CD14-positive monocyte (primary cell): ENCODE measurements at regions of chr21 and their contacts with region 1.

Region 1: GRCh38 chr21:39217356-39218081 is 34.3 kb upstream of the PSMG1 start:
- DNase-seq: no peak
- H3K4me3 ChIP-seq: no peak overlapping the region
- H3K4me3 Mint-ChIP-seq: no peak overlapping the region
- H3K27ac ChIP-seq: no peak overlapping the region
- H3K27ac Mint-ChIP-seq: no peak overlapping the region
- H3K4me1 ChIP-seq: no peaks in the 10 kb centered on the region
- H3K4me1 Mint-ChIP-seq: no peaks in the 10 kb centered on the region
- H3K27me3 ChIP-seq: no peaks in the 10 kb centered on the region
- H3K27me3 Mint-ChIP-seq: no peaks in the 10 kb centered on the region
- CTCF ChIP-seq: no peak

Region 2: DNA sequence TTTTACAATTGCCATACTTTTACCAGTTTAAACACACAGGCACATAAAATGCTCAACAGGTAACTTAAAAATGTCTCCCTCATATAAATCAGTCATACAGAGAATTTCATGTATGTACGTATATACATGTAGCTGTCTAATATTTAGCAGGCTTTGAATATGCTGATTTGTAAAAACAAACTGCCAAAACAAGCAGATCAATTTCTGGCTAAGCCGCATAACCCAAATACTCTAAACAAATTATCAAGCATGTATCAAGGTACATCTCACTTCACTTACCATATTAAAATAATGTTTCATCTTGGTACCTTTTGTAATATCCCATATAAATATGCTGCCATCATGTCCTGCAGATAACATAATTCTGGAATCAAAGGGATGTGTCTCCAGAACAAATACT is 52.1 kb after region 1 on chr21:
- intact Hi-C with region 1: loop called in 1 of 2 experiments (anchors 10 kb)
- DNase-seq: no peak
- H3K4me3 ChIP-seq: no peak overlapping the region
- H3K4me3 Mint-ChIP-seq: no peak overlapping the region
- H3K27ac ChIP-seq: no peak overlapping the region
- H3K27ac Mint-ChIP-seq: no peak overlapping the region
- H3K4me1 ChIP-seq: no peaks in the 10 kb centered on the region
- H3K4me1 Mint-ChIP-seq: no peaks in the 10 kb centered on the region
- H3K27me3 ChIP-seq: no peaks in the 10 kb centered on the region
- H3K27me3 Mint-ChIP-seq: no peaks in the 10 kb centered on the region
- CTCF ChIP-seq: no peak

Region 3: DNA sequence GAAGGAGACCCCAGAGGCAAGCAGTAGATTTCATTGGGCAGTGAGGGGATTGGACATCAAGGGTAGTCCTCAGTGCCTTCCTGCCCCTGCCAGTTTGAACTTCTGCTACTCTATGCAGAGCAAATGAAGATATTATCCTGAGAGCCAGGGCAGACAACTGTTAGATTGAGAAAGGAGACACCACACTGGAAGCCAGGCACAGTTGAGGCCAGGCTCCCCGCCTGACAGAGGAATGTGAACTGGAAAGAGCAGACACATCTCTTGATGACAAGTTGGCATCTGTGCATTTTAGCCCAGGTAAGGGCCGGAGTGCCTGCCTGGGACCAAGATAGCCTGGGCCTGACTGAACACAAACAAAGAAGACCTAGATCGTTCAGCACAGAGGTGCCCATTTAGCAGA is 250.2 kb after region 1 on chr21:
- intact Hi-C with region 1: no loop called
- DNase-seq: no peak
- H3K4me3 ChIP-seq: no peak overlapping the region
- H3K4me3 Mint-ChIP-seq: no peak overlapping the region
- H3K27ac ChIP-seq: no peak overlapping the region
- H3K27ac Mint-ChIP-seq: no peak overlapping the region
- H3K4me1 ChIP-seq: no peaks in the 10 kb centered on the region
- H3K4me1 Mint-ChIP-seq: no peaks in the 10 kb centered on the region
- H3K27me3 ChIP-seq: no peaks in the 10 kb centered on the region
- H3K27me3 Mint-ChIP-seq: peaks cover 0 to 4% (median 3%) of the 10 kb centered on the region in 3 donors
- CTCF ChIP-seq: no peak